ENCODE measurements at regions of chr7 and their contacts with region 1.

Region 1: DNA sequence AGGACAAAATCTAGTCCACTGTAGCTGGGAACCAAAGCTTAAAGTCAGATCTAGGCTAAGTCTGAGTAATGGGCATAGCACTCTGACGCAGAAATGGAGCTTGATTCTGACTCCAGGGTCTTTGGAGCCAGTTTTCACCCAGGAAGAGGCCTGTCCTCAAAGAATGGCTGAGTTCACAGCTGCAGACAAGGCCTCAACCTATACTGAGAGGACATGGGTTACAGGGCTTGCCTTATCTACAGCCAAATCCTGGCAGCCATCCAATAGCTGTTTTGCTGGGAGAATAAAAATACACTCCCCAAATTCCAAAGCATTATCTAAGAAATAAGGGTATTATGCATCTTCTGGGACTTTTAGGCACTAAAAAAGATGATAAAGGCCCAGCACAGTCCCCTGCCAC is 154.8 kb downstream of the RAPGEF5 start:
- DNase-seq: no peak
- H3K4me3 ChIP-seq: no peak overlapping the region
- H3K27ac ChIP-seq: no peak overlapping the region
- H3K4me1 ChIP-seq: no peaks in the 10 kb centered on the region
- H3K27me3 ChIP-seq: no peaks in the 10 kb centered on the region
- CTCF ChIP-seq: no peak

Region 2: GRCh38 chr7:22061775-22062174 is 140.4 kb before region 1 on chr7:
- CTCF ChIA-PET with region 1: no interaction called
- POLR2A ChIA-PET with region 1: no interaction called
- intact Hi-C with region 1: no loop called
- DNase-seq: no peak
- H3K4me3 ChIP-seq: no peak overlapping the region
- H3K27ac ChIP-seq: no peak overlapping the region
- H3K4me1 ChIP-seq: no peaks in the 10 kb centered on the region
- H3K27me3 ChIP-seq: peaks cover 98% of the 10 kb centered on the region
- CTCF ChIP-seq: no peak

Region 3: GRCh38 chr7:22121702-22122474 is 80.3 kb before region 1 on chr7:
- CTCF ChIA-PET with region 1: interaction called, 13 read pairs
- POLR2A ChIA-PET with region 1: no interaction called
- intact Hi-C with region 1: no loop called
- DNase-seq: no peak
- H3K4me3 ChIP-seq: no peak overlapping the region
- H3K27ac ChIP-seq: no peak overlapping the region
- H3K4me1 ChIP-seq: no peaks in the 10 kb centered on the region
- H3K27me3 ChIP-seq: no peaks in the 10 kb centered on the region
- CTCF ChIP-seq: no peak